Gastrocnemius medialis (tissue), 4 donors: ENCODE measurements at regions of chr11 and their contacts with region 1.

Region 1: DNA sequence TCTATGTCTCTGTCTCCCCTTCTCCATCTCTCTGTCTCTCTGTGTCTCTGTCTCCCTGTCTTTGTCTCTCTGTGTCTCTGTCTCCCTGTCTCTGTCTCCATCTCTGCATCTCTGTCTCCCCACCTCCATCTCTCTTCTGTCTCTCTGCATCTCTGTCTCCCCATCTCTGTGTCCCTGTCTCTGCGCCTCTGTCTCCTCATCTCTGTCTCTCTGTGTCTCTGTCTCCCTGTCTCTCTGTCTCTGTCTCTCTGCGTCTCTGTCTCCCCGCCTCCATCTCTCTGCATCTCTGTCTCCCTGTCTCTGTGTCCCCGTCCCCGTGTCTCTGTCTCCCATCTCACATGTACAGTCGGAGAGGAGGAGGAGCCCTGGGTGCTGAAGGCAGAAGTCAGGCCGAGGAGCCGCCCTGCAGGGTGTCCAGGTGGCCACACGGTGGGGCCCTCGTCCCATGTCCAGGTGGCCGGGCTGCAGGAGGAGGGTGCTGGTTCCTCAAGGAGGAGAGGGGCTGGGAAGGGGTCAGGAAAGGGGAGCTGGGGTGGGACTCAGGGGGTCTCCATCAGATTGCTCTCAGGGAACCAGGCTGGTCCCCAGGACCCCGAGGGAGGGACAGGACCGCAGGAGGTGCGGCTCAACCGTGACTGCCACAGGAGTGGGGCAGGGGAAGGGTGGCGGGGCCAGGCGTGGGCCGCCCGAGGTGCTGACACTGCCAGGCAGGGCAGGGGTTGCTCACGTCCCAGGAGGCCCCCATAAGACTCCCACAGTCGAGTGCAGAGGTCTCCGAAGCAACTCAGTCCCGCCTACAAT is 25.6 kb upstream of the TH start:
- DNase-seq: peak; percentile 13 to 24
- ATAC-seq: no peak
- H3K4me3 ChIP-seq: no peak overlapping the region
- H3K27ac ChIP-seq: no peak overlapping the region
- H3K4me1 ChIP-seq: no peaks in the 10 kb centered on the region
- H3K27me3 ChIP-seq: peaks cover 0 to 17% (median 14%) of the 10 kb centered on the region in 3 donors
- CTCF ChIP-seq: peak; percentile 29 to 70 (median 66)
- POLR2A ChIP-seq: no peak

Region 2: DNA sequence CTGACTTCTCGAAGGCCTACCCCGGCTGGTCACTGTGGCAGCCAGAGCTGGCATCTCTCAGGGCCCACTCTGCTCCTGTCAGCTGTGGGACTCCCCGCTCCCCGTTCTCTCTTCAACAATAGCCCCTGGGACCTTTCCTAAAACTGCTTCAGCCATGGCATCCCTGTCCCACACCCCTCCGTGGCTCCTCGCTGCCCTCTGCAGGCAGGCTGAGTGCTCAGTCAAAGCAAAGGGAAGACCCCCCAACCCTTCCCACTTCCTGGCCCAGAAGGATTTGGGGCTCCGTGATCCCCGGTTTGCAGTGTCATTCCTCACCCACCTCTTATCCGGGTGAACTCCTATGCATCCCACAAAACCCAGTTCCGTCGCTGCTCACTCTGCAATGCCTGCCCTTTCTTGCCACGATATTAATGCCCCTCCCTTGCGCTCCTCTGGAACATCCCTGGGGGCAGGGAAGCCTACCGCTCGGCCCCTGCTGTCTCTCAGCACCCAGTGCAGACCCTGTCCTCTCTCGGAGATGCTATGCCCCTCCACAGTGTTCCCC is 23.9 kb before region 1 on chr11:
- in situ Hi-C with region 1: no loop called
- intact Hi-C with region 1: no loop called
- DNase-seq: no peak
- ATAC-seq: no peak
- H3K4me3 ChIP-seq: no peak overlapping the region
- H3K27ac ChIP-seq: no peak overlapping the region
- H3K4me1 ChIP-seq: no peaks in the 10 kb centered on the region
- H3K27me3 ChIP-seq: peaks cover 2 to 15% (median 14%) of the 10 kb centered on the region in 3 donors
- CTCF ChIP-seq: no peak
- POLR2A ChIP-seq: no peak

Region 3: GRCh38 chr11:2305140-2305840 is 108.1 kb after region 1 on chr11:
- in situ Hi-C with region 1: no loop called
- intact Hi-C with region 1: loop called (anchors 10 kb)
- DNase-seq: peak; percentile 59 to 64
- ATAC-seq: peak; percentile 68 to 86
- H3K4me3 ChIP-seq: no peak overlapping the region
- H3K27ac ChIP-seq: no peak overlapping the region
- H3K4me1 ChIP-seq: peaks cover 0 to 7% of the 10 kb centered on the region in 2 donors
- H3K27me3 ChIP-seq: no peaks in the 10 kb centered on the region
- CTCF ChIP-seq: peak; percentile 70 to 94 (median 93)
- POLR2A ChIP-seq: no peak

Region 4: DNA sequence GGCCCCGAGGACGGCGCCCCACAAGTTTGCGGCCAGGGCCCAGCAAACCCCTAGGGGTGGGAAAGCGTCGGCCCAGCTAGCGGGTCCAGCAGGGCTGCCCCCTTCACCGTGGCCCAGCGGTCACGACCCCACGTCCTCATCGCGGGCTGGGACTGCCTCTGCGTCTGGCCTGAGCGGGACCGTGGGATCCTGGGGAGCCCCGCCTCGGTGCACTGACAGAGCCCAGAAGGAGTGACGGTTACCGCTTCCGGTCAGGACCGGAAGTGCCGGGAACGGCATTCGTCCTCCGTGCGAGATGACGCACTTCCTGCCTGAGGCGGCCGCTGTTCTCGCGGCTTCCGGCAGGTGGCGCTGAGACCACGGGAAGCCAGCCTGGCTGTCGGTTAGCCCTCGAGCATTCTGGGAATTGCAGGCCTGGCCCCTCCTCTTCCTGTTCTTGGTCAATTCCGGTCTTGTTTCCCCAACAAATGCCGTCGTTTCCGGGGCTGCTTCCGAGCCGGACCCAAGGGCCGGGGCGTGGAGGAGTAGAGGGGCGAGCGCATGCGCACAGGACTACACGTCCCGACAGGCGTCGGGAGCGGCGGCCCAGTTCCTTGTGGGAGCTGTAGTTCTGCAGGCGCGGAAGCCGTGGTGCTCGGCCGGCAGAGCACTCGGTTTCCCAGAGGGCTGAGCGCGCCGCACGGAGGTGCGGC is 203.0 kb after region 1 on chr11 and contains the start of gene TSSC4:
- in situ Hi-C with region 1: loop called in 2 of 4 experiments (anchors 25 kb)
- intact Hi-C with region 1: no loop called
- DNase-seq: peak; percentile 100
- ATAC-seq: peak; percentile 96 to 97
- H3K4me3 ChIP-seq: peak within 1 kb of the TSS; percentile 84 to 100 (median 97)
- H3K27ac ChIP-seq: peak within 1 kb of the TSS; percentile 97 to 100 (median 98)
- H3K4me1 ChIP-seq: peaks cover 22 to 26% of the 10 kb centered on the region in 2 donors
- H3K27me3 ChIP-seq: no peaks in the 10 kb centered on the region
- CTCF ChIP-seq: peak; percentile 95 to 99 (median 98)
- POLR2A ChIP-seq: peak; percentile 91 to 97
- total RNA-seq, gene TSSC4: 53.4 to 92.5 (median 76.8) TPM